ENCODE measurements at regions of chr18 and their contacts with region 1.

Region 1: DNA sequence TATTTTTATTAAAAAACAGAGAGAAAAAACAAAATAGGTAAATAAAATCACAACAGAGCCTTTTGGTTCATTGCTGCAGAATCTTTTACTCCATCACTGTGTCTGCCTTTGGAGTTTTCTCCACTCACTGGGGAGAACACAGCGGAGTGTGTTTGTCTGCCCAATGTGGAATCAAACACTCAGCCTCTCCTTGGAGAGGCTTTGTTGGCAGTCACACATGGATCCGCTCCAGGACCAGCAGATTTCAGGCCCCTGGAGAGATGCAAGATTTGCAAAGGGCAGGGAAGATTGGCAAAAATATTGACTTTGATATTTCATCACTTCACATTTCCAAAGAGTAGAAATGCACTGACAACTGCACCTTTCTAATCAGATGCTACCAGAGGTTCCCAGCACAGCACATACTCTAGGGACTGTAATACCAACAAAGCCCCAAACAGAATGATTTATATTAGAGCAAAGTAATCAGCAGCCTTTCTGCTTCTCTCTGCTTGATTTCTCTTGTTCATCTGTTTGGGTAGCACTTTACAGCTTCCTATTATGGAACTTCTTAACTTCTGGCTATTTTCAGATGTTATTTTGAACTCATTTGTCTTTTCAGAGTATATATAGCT is 1898.8 kb upstream of the PIK3C3 start:
- DNase-seq: no peak
- ATAC-seq: no peak
- H3K4me3 ChIP-seq: no peak overlapping the region
- H3K27ac ChIP-seq: no peak overlapping the region
- H3K4me1 ChIP-seq: no peaks in the 10 kb centered on the region
- H3K27me3 ChIP-seq: no peaks in the 10 kb centered on the region
- CTCF ChIP-seq: no peak
- POLR2A ChIP-seq: no peak

Region 2: DNA sequence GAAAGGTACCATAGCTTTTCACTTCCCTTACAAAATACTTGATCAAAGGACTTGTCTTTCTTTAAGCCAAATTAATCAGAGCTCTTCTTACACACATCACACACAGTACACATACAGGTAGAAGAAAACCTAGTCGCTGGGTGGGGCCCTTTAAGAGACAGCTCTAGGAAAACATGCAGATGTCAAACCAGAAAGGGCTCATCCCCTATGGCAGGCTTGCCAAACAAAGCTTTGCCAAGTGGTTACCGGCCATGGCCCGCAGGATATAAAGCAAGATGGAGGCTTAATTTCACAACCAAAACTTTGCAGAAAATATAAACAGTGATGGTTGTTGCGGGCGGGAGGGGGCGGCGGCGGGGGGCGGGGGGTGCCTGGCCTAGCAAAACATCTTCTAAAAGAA is 257.2 kb before region 1 on chr18:
- intact Hi-C with region 1: no loop called
- DNase-seq: no peak
- ATAC-seq: no peak
- H3K4me3 ChIP-seq: peak overlapping the region in 2 of 12 donors; percentile 23 to 53
- H3K27ac ChIP-seq: no peak overlapping the region
- H3K4me1 ChIP-seq: no peaks in the 10 kb centered on the region
- H3K27me3 ChIP-seq: peaks cover 0 to 7% (median 0%) of the 10 kb centered on the region in 9 donors
- CTCF ChIP-seq: no peak
- POLR2A ChIP-seq: no peak

Region 3: GRCh38 chr18:39994498-39994897 is 61.7 kb before region 1 on chr18:
- intact Hi-C with region 1: loop called in 1 of 10 experiments (anchors 10 kb)
- DNase-seq: no peak
- ATAC-seq: no peak
- H3K4me3 ChIP-seq: no peak overlapping the region
- H3K27ac ChIP-seq: no peak overlapping the region
- H3K4me1 ChIP-seq: no peaks in the 10 kb centered on the region
- H3K27me3 ChIP-seq: no peaks in the 10 kb centered on the region
- CTCF ChIP-seq: no peak
- POLR2A ChIP-seq: no peak

Measured in heart left ventricle (tissue), 16 donors.